Spleen (tissue), 13 donors: ENCODE measurements at regions of chr9 and their contacts with region 1.

Region 1: DNA sequence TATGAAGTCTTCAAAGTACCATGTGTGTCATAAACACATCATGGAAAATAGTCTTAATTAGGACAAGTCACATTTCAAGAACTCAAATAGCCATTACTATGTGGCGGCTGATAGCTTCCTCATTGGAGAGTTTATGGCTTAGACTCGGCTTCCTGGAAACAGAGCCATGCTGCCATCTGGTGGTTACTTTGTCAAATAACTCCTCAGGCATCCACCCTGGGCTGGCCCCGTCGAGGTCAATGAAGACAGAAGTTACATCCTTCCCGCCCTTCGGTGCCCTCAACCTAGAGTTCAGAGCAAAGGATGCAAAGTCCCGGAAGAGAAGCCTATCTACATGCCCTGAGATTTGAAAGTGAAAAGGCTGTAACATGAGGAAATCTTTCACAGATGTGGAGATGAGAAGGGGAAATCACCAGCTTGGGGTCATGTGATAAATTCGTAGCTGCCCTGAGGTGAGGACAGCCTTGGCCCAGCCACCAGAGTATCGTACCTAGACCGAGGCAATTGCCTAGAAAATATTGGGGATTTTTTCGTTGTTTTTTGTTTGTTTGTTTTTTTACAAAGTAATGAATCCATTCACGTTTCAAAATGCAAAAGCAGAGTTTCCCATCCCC is 45.5 kb upstream of the ZNF169 start:
- DNase-seq: peak; percentile 88
- H3K4me3 ChIP-seq: peak overlapping the region in 1 of 8 donors; percentile 23
- H3K27ac ChIP-seq: no peak overlapping the region
- H3K4me1 ChIP-seq: peaks cover 0 to 9% (median 5%) of the 10 kb centered on the region in 6 donors
- H3K27me3 ChIP-seq: peaks cover 0 to 18% (median 0%) of the 10 kb centered on the region in 7 donors
- CTCF ChIP-seq: peak; percentile 80 to 95 (median 89)
- POLR2A ChIP-seq: no peak

Region 2: DNA sequence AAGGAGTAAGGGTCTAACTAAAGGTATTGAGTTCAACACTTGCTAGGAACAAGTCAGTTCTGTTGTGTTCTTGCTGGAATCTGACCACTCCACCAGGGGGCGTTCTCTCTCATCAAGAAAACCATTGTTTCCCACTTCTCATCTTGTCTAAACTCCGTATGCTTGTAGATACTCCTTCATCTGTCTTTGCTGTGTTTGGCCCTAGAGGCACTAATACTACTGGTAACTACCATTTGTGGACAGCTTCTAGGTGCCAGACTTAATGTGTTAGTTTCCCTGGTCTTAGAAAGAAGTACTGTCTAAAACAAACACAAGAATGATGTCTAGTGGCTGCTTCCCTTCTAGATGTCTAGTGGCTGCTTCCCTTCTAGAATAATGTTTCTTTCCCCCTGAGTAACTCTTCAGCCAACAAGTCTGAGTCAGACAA is 148.1 kb before region 1 on chr9:
- intact Hi-C with region 1: loop called (anchors 2 kb)
- DNase-seq: peak; percentile 81
- H3K4me3 ChIP-seq: no peak overlapping the region
- H3K27ac ChIP-seq: no peak overlapping the region
- H3K4me1 ChIP-seq: peaks cover 0 to 7% (median 4%) of the 10 kb centered on the region in 6 donors
- H3K27me3 ChIP-seq: no peaks in the 10 kb centered on the region
- CTCF ChIP-seq: peak; percentile 40 to 87 (median 81)
- POLR2A ChIP-seq: no peak

Region 3: GRCh38 chr9:94250456-94250855 is 36.8 kb after region 1 on chr9:
- intact Hi-C with region 1: no loop called
- DNase-seq: no peak
- H3K4me3 ChIP-seq: no peak overlapping the region
- H3K27ac ChIP-seq: no peak overlapping the region
- H3K4me1 ChIP-seq: no peaks in the 10 kb centered on the region
- H3K27me3 ChIP-seq: no peaks in the 10 kb centered on the region
- CTCF ChIP-seq: no peak
- POLR2A ChIP-seq: no peak

Region 4: GRCh38 chr9:94299069-94299586 is 85.5 kb after region 1 on chr9:
- intact Hi-C with region 1: no loop called
- DNase-seq: no peak
- H3K4me3 ChIP-seq: no peak overlapping the region
- H3K27ac ChIP-seq: no peak overlapping the region
- H3K4me1 ChIP-seq: no peaks in the 10 kb centered on the region
- H3K27me3 ChIP-seq: no peaks in the 10 kb centered on the region
- CTCF ChIP-seq: no peak
- POLR2A ChIP-seq: no peak

Region 5: DNA sequence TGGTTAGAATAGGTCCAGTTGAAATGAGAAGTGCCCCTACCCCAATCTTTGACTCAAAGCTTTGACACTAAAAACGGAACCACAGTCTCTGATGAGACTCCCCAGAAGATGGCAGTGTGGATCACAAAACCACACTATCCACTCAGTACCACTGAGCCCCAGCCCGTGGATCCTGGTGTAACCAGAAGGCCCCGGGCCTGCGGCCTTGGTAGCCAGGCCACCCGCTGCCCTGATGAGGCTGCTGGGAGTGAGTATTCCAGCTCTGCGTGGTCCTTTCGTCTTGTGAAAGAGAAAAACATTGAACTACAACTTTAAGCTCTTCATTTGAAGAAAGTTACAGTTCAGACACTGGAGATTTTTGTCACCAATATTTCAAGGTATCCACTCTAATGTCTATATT is 467.9 kb after region 1 on chr9:
- intact Hi-C with region 1: no loop called
- DNase-seq: peak; percentile 81
- H3K4me3 ChIP-seq: no peak overlapping the region
- H3K27ac ChIP-seq: no peak overlapping the region
- H3K4me1 ChIP-seq: no peaks in the 10 kb centered on the region
- H3K27me3 ChIP-seq: no peaks in the 10 kb centered on the region
- CTCF ChIP-seq: peak; percentile 32 to 76 (median 65)
- POLR2A ChIP-seq: no peak